ENCODE measurements at regions of chr11 and their contacts with region 1.

Region 1: GRCh38 chr11:123357961-123358841 is 71.9 kb upstream of the GRAMD1B start:
- DNase-seq: peak in 6 of 10 donors; percentile 24 to 61 (median 39)
- H3K4me3 ChIP-seq: peak overlapping the region; percentile 29 to 71 (median 55)
- H3K27ac ChIP-seq: peak overlapping the region in 7 of 59 donors; percentile 4 to 71 (median 27)
- H3K27me3 ChIP-seq: peaks cover 0 to 46% (median 7%) of the 10 kb centered on the region in 45 donors
- CTCF ChIP-seq: peak in 31 of 56 donors; percentile 3 to 47 (median 25)

Region 2: DNA sequence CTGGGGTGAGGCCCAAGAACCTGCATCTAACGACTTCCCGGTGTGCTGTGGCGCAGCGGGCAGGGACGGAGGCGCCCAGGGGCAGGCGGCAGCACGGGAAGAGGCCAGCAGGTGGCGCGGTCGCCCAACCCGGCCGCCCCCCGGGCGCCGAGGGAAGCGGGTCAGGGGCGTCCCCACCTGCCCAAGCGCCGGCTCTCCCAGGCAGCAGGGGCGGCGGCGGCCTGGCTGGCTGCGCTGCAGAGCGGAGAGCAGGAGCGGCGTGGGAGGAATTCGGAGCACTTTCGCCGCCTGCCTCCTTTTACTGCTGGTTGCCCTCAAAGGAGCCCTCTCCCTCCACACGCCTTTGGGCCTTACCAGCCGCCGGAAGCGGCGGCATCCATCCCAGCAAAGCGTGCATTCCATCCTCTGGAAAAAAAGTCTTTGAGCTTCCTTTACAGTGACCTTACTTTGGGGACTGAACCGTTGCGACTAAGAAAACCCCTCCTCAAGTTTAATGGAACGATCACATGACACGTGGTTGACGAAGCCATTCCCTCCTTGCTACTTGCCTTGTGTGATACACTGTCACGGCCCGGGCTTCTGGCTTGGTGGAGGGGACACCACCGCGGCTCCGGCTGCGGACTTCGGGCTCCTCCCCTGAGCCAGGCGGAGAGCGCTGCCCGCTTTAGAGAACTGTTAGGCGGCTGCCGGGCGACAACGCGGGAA is 56.4 kb before region 1 on chr11:
- intact Hi-C with region 1: loop called (anchors 5 kb)
- DNase-seq: peak; percentile 25 to 82 (median 49)
- H3K4me3 ChIP-seq: peak overlapping the region; percentile 7 to 77 (median 59)
- H3K27ac ChIP-seq: peak overlapping the region in 2 of 59 donors; percentile 39 to 46
- H3K27me3 ChIP-seq: peaks cover 0 to 42% (median 6%) of the 10 kb centered on the region in 45 donors
- CTCF ChIP-seq: peak; percentile 54 to 98 (median 90)

Region 3: GRCh38 chr11:123407130-123407995 is 49.2 kb after region 1 on chr11:
- intact Hi-C with region 1: no loop called
- DNase-seq: peak in 4 of 10 donors; percentile 26 to 62 (median 30)
- H3K4me3 ChIP-seq: peak overlapping the region in 1 of 59 donors; percentile 10
- H3K27ac ChIP-seq: no peak overlapping the region
- H3K27me3 ChIP-seq: peaks cover 0 to 13% (median 0%) of the 10 kb centered on the region in 45 donors
- CTCF ChIP-seq: peak in 53 of 56 donors; percentile 14 to 70 (median 48)

Measured in dorsolateral prefrontal cortex (tissue), 120 donors.